ENCODE measurements at regions of chr2 and their contacts with region 1.

Region 1: GRCh38 chr2:38264396-38265281 is 112.4 kb downstream of the ATL2 start:
- DNase-seq: peak in 3 of 5 donors; percentile 71 to 97 (median 94)
- H3K4me3 ChIP-seq: no peak overlapping the region
- H3K27ac ChIP-seq: peak overlapping the region in 1 of 2 donors; percentile 55
- H3K4me1 ChIP-seq: peaks cover 0 to 3% (median 0%) of the 10 kb centered on the region in 3 donors
- H3K27me3 ChIP-seq: no peaks in the 10 kb centered on the region
- CTCF ChIP-seq: no peak

Region 2: DNA sequence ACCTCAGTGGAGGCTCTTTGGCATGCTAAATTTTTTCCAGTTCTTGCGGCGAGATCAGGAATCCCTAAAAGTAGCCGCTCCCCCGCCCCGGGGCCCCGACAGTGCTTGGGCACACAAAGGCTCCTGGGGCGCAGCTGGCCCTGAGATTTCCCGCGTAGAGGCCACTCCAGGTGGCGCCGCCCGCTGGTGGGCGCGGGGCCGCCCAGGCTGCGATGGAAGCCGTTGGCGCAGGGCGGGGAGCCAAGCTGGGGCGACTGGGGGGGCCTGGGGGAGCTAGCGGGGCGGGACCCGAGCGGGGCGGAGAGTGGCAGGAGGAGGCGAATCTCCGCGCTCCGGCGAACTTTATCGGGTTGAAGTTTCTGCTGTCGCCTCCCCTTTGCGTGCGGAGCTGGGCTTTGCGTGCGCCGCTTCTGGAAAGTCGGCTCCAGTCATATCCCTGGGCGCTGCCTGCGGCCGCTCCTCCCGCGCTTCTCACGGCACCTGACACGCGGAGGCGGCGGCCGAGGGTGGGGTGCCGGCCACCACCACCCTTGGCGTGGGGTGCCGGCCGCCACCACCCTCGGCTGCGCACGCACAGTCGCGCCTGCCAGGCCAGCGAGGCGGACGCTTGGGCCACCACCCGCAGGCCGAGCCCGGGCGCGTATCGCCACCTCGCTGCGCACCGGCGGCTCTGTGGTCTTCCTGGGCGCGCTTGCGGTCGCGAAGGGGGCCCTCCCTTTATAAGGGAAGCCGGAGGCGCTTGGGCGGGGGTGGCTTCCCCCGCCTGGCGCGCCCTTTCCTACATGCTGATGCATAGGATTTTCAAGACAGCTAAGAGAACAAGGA is 187.8 kb before region 1 on chr2:
- intact Hi-C with region 1: loop called (anchors 10 kb)
- DNase-seq: peak; percentile 83 to 96 (median 91)
- H3K4me3 ChIP-seq: peak overlapping the region; percentile 53 to 69 (median 64)
- H3K27ac ChIP-seq: peak overlapping the region; percentile 86 to 88
- H3K4me1 ChIP-seq: peaks cover 0 to 13% (median 0%) of the 10 kb centered on the region in 3 donors
- H3K27me3 ChIP-seq: no peaks in the 10 kb centered on the region
- CTCF ChIP-seq: no peak